Activated CD8-positive, alpha-beta T cell treated with anti-CD3 and anti-CD28 coated beads, Interleukin-2, amount 10 ng/mL, durations not matched to agents 7 days and 5 days (primary cell): ENCODE measurements at regions of chr5 and their contacts with region 1.

Region 1: GRCh38 chr5:141636413-141637122 is at the starts of genes HDAC3 and RELL2:
- DNase-seq: peak; percentile 94
- ATAC-seq: peak; percentile 79
- H3K4me3 Mint-ChIP-seq: peak within 1 kb of the TSS; percentile 93
- H3K27ac Mint-ChIP-seq: peak within 1 kb of the TSS; percentile 90
- H3K4me1 Mint-ChIP-seq: peaks cover 56% of the 10 kb centered on the region
- H3K27me3 Mint-ChIP-seq: no peaks in the 10 kb centered on the region
- total RNA-seq, gene HDAC3: 88.1 to 91.8 TPM
- total RNA-seq, gene RELL2: 36.9 to 37.1 TPM

Region 2: DNA sequence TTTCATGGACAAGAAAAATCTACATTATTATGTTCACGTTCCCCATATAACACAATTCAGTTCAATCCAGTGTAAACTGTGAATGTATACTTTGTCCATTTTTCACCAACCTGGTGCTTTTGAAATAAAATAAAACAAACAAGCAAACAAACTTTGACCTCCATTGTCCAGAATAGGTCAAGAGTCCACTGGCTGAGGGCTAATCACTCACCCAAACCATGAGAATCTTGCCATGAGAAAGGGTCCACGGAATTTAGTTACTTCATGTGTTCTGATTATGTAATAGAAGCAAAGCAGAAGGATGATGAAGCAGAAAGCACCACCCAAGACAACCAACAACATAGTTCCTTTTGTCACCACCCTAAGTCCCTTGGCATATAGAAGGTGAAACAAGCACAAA is 46.4 kb before region 1 on chr5:
- CTCF ChIA-PET with region 1: interaction called, 159 read pairs
- POLR2A ChIA-PET with region 1: interaction called, 8 read pairs
- DNase-seq: no peak
- ATAC-seq: no peak
- H3K4me3 Mint-ChIP-seq: no peak overlapping the region
- H3K27ac Mint-ChIP-seq: no peak overlapping the region
- H3K4me1 Mint-ChIP-seq: peaks cover 27% of the 10 kb centered on the region
- H3K27me3 Mint-ChIP-seq: no peaks in the 10 kb centered on the region

Region 3: DNA sequence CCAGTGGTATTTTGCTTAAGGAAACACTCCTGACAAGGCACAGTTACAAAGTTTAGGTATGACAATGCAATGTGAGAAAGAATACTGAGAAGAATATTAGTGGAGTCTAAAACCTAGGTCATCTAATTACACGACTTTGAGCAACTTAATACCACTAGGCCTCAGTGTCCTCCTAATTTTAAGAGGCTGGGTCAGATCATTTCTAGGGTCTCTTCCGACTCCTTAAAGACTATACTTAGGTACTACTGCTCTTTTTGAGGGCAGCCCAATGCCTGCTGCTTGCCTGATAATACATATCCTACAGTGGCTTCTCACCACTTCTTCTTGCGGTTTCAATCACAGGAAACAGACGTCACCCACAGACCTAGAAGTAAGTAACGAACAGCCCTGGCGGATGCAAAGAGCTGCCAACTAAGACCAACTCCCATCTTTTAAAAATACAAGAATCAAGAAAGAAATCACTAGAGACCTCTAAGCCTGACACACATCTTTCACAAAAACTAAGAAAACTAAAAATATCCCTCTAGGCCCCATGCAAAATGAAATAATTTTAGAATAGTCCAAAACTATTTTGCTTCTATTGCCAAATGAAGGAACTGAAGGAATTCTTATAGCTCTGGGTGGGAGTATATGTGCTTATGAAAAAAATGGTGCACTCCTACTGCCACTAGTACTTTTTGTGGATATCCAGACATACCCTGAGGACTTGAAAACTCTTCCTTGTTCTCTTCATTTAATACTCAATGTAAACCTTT is 30.9 kb before region 1 on chr5:
- CTCF ChIA-PET with region 1: interaction called, 34 read pairs
- POLR2A ChIA-PET with region 1: interaction called, 4 read pairs
- DNase-seq: peak; percentile 90
- ATAC-seq: peak; percentile 91
- H3K4me3 Mint-ChIP-seq: peak overlapping the region; percentile 77
- H3K27ac Mint-ChIP-seq: peak overlapping the region; percentile 97
- H3K4me1 Mint-ChIP-seq: peaks cover 88% of the 10 kb centered on the region
- H3K27me3 Mint-ChIP-seq: no peaks in the 10 kb centered on the region

Region 4: DNA sequence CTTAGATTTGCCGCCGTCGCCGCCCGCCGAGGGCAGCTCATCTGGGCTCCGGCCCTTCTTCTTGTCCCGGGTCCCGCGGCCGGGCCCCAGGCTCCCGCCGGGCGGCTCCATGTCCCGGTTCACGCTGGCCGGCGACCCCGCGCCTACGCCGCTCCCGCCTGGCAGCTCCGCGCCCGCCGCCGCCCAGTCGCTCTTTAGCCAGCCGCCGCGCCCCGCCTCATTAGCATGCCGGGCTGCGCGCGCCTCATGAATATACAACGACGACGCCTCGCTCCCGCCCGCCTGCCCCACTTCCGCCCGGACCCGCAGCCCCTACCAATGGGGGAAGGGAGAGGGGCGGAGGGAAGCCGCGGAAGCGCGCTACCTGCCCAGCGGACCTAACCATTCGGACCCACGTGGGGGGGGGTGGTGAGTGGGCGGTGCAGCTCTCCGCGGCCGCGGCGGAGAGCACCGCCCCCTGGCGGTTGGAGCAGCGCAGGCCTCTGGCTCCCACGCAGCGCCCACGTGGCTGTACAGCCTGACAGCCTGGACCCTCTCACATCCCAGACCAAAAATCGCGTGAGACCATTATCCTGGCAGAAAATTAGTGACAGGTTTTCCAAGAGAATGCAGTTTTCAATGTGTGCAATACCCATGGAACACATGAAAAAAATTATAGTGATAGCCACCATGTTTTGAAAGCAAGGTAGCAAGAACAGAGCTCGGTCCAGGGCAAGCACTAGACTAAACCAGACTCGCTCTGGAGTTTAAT is 17.6 kb before region 1 on chr5 and contains the start of gene DIAPH1:
- CTCF ChIA-PET with region 1: interaction called, 206 read pairs
- POLR2A ChIA-PET with region 1: interaction called, 39 read pairs
- DNase-seq: peak; percentile 98
- ATAC-seq: peak; percentile 90
- H3K4me3 Mint-ChIP-seq: peak within 1 kb of the TSS; percentile 98
- H3K27ac Mint-ChIP-seq: peak within 1 kb of the TSS; percentile 98
- H3K4me1 Mint-ChIP-seq: peaks cover 59% of the 10 kb centered on the region
- H3K27me3 Mint-ChIP-seq: no peaks in the 10 kb centered on the region
- total RNA-seq, gene DIAPH1: 281 to 286 TPM

Region 5: GRCh38 chr5:141664732-141665461 is 28.3 kb after region 1 on chr5:
- CTCF ChIA-PET with region 1: interaction called, 13 read pairs
- POLR2A ChIA-PET with region 1: interaction called, 5 read pairs
- DNase-seq: peak; percentile 84
- ATAC-seq: peak; percentile 93
- H3K4me3 Mint-ChIP-seq: no peak overlapping the region
- H3K27ac Mint-ChIP-seq: peak overlapping the region; percentile 0
- H3K4me1 Mint-ChIP-seq: peaks cover 8% of the 10 kb centered on the region
- H3K27me3 Mint-ChIP-seq: no peaks in the 10 kb centered on the region